Panc1 (cell line): ENCODE measurements at regions of chr11 and their contacts with region 1.

Region 1: GRCh38 chr11:27698872-27699474 is 1.3 kb downstream of the BDNF start:
- DNase-seq: no peak
- ATAC-seq: peak; percentile 88
- H3K4me3 ChIP-seq: peak overlapping the region; percentile 48 to 66
- H3K27ac ChIP-seq: no peak overlapping the region
- H3K4me1 ChIP-seq: peaks cover 12% of the 10 kb centered on the region
- H3K27me3 ChIP-seq: peaks cover 15% of the 10 kb centered on the region
- CTCF ChIP-seq: peak; percentile 94

Region 2: DNA sequence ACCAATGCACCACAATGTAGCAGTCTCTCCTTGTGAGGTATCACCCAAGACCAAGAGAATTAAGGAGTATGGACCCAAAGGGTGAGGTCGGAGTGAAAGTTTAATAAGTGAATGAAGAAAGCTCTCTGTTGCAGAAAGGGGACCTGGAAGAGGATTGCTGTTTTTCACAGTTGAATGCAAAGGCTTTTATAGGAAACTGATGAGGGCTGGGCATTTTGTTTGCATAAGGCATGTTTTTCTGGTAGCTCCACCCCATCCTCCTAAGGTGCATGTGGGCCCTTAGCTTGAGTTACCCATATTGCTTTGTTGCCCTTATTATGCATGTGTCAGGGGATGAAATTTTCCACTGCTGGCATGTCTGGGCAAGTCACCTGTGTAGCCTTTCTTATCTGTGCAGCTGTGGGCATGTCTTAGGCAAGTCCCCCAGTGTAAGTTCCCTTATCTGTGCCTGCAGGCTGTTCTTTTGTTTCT is 63.4 kb before region 1 on chr11:
- CTCF ChIA-PET with region 1: no interaction called
- POLR2A ChIA-PET with region 1: no interaction called
- in situ Hi-C with region 1: no loop called
- intact Hi-C with region 1: no loop called
- DNase-seq: no peak
- ATAC-seq: no peak
- H3K4me3 ChIP-seq: no peak overlapping the region
- H3K27ac ChIP-seq: no peak overlapping the region
- H3K4me1 ChIP-seq: no peaks in the 10 kb centered on the region
- H3K27me3 ChIP-seq: no peaks in the 10 kb centered on the region
- CTCF ChIP-seq: no peak

Region 3: DNA sequence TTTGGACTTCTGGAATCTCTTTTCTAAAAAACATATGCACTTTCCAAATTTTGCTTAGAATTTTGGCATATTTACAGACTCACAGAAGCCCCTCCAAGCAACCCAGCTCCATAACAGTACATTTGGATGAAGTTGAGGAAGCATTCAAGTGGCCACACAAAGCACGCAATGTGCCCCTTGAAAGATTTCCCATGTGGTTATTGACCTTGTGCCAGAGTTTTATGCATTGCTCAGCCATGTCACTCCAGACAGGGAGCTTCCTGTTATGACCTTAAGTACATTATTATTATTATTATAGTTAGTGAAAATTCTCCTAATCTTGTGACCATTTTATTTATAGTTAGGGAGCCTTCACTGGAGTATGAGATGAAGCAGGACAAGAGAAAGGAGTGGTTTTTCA is 36.3 kb after region 1 on chr11:
- CTCF ChIA-PET with region 1: no interaction called
- POLR2A ChIA-PET with region 1: no interaction called
- in situ Hi-C with region 1: no loop called
- intact Hi-C with region 1: no loop called
- DNase-seq: no peak
- ATAC-seq: no peak
- H3K4me3 ChIP-seq: no peak overlapping the region
- H3K27ac ChIP-seq: no peak overlapping the region
- H3K4me1 ChIP-seq: no peaks in the 10 kb centered on the region
- H3K27me3 ChIP-seq: no peaks in the 10 kb centered on the region; the same call in 1 of the 2 replicates
- CTCF ChIP-seq: no peak

Region 4: GRCh38 chr11:28107748-28108618 is 409.0 kb after region 1 on chr11 and contains the starts of genes KIF18A and METTL15:
- CTCF ChIA-PET with region 1: no interaction called
- POLR2A ChIA-PET with region 1: interaction called, 10 read pairs
- in situ Hi-C with region 1: loop called (anchors 25 kb)
- intact Hi-C with region 1: loop called (anchors 5 kb)
- DNase-seq: peak; percentile 91
- ATAC-seq: peak; percentile 97
- H3K4me3 ChIP-seq: peak within 1 kb of the TSS; percentile 84 to 96
- H3K27ac ChIP-seq: peak within 1 kb of the TSS; percentile 99
- H3K4me1 ChIP-seq: peaks cover 40% of the 10 kb centered on the region
- H3K27me3 ChIP-seq: no peaks in the 10 kb centered on the region
- CTCF ChIP-seq: no peak
- total RNA-seq, gene KIF18A: 20.8 TPM
- total RNA-seq, gene METTL15: 11.4 TPM

Region 5: GRCh38 chr11:28697920-28698827 is 999.2 kb after region 1 on chr11:
- CTCF ChIA-PET with region 1: interaction called, 3 read pairs
- POLR2A ChIA-PET with region 1: no interaction called
- in situ Hi-C with region 1: no loop called
- intact Hi-C with region 1: loop called (anchors 5 kb)
- DNase-seq: no peak
- ATAC-seq: peak; percentile 51
- H3K4me3 ChIP-seq: no peak overlapping the region
- H3K27ac ChIP-seq: no peak overlapping the region
- H3K4me1 ChIP-seq: no peaks in the 10 kb centered on the region
- H3K27me3 ChIP-seq: no peaks in the 10 kb centered on the region
- CTCF ChIP-seq: peak; percentile 88

Region 6: GRCh38 chr11:29040491-29040890 is 1341.5 kb after region 1 on chr11:
- CTCF ChIA-PET with region 1: no interaction called
- POLR2A ChIA-PET with region 1: no interaction called
- in situ Hi-C with region 1: no loop called
- intact Hi-C with region 1: loop called (anchors 5 kb)
- DNase-seq: no peak
- ATAC-seq: no peak
- H3K4me3 ChIP-seq: no peak overlapping the region
- H3K27ac ChIP-seq: no peak overlapping the region
- H3K4me1 ChIP-seq: no peaks in the 10 kb centered on the region
- H3K27me3 ChIP-seq: no peaks in the 10 kb centered on the region
- CTCF ChIP-seq: no peak

Region 7: GRCh38 chr11:29333993-29334775 is 1635.2 kb after region 1 on chr11:
- CTCF ChIA-PET with region 1: no interaction called
- POLR2A ChIA-PET with region 1: no interaction called
- in situ Hi-C with region 1: no loop called
- intact Hi-C with region 1: loop called (anchors 2 kb)
- DNase-seq: peak; percentile 20
- ATAC-seq: peak; percentile 70
- H3K4me3 ChIP-seq: no peak overlapping the region
- H3K27ac ChIP-seq: no peak overlapping the region
- H3K4me1 ChIP-seq: no peaks in the 10 kb centered on the region
- H3K27me3 ChIP-seq: no peaks in the 10 kb centered on the region
- CTCF ChIP-seq: peak; percentile 67